ENCODE measurements at regions of chr1 and their contacts with region 1.

Region 1: DNA sequence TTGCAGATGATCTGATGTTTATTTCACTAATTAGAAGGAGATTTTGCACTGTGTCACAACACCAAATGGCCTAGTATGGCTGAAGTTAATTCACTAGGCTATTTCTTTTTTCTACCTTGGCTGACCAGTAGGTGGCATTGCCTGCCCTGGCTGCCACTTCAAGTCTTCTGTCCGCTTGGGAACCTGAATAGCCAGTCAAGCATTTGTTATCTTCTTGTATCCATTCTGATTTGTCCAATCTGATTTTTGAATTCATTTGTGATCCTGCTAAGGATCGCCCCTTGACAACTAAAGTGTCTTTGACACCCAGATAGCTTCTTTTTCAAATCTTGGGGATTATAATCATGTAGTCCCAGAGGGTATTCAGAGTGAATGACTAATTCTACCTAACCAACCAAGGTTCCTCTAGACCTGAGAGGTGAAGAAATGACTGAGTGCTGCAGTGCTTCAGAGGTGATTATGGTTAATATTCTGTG is 99.4 kb downstream of the GIPC2 start:
- DNase-seq: peak in 4 of 5 donors; percentile 29 to 36 (median 32)
- H3K4me3 ChIP-seq: no peak overlapping the region
- H3K4me3 Mint-ChIP-seq: peak overlapping the region in 1 of 8 donors; percentile 50
- H3K27ac ChIP-seq: no peak overlapping the region
- H3K27ac Mint-ChIP-seq: no peak overlapping the region
- H3K4me1 ChIP-seq: peaks cover 11% of the 10 kb centered on the region
- H3K4me1 Mint-ChIP-seq: peaks cover 8 to 35% (median 12%) of the 10 kb centered on the region in 4 donors
- H3K27me3 ChIP-seq: no peaks in the 10 kb centered on the region
- H3K27me3 Mint-ChIP-seq: peaks cover 9 to 13% of the 10 kb centered on the region in 2 donors

Region 2: DNA sequence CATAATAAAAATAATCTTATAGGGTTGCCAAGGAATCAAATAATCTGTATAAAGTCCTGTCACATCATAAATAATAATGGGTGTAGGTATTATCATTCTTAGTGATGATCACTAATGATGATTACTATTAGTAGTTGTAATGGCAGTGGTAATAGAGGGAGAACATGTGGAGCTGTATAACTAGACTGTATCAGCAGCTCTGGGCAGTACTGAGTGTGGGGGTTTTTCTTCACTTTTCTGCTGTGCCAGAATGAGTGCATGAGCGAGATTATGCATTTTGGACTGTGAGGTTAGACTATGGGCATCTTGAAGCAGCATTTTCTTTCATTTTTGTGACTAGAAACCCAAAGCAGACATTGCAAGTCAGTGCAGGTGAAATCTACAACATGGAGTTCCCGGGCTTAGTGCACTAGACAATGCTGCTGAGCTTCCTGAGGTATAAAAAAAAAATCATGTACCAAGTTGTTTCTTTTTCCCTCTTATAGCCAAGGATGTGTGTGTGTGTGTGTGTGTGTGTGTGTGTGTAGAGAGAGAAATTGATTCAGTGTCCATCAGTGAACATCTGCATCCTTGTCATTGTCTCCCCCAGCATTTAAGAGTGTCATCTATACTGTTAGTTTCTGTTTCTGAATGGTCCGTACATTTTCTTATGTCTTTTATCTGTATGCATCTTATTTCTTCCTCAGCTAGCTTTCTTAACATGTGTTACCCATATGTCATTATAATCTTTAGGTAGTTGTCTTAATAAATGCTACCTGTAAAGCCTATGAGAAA is 12.8 kb before region 1 on chr1:
- CTCF ChIA-PET with region 1: interaction called, 45 read pairs
- POLR2A ChIA-PET with region 1: interaction called, 3 read pairs
- intact Hi-C with region 1: no loop called
- DNase-seq: no peak
- H3K4me3 ChIP-seq: no peak overlapping the region
- H3K4me3 Mint-ChIP-seq: no peak overlapping the region
- H3K27ac ChIP-seq: no peak overlapping the region
- H3K27ac Mint-ChIP-seq: no peak overlapping the region
- H3K4me1 ChIP-seq: no peaks in the 10 kb centered on the region
- H3K4me1 Mint-ChIP-seq: no peaks in the 10 kb centered on the region
- H3K27me3 ChIP-seq: no peaks in the 10 kb centered on the region
- H3K27me3 Mint-ChIP-seq: no peaks in the 10 kb centered on the region

Region 3: GRCh38 chr1:78176448-78176847 is 31.3 kb after region 1 on chr1:
- CTCF ChIA-PET with region 1: no interaction called
- POLR2A ChIA-PET with region 1: no interaction called
- intact Hi-C with region 1: no loop called
- DNase-seq: no peak
- H3K4me3 ChIP-seq: no peak overlapping the region
- H3K4me3 Mint-ChIP-seq: no peak overlapping the region
- H3K27ac ChIP-seq: no peak overlapping the region
- H3K27ac Mint-ChIP-seq: no peak overlapping the region
- H3K4me1 ChIP-seq: no peaks in the 10 kb centered on the region
- H3K4me1 Mint-ChIP-seq: no peaks in the 10 kb centered on the region
- H3K27me3 ChIP-seq: no peaks in the 10 kb centered on the region
- H3K27me3 Mint-ChIP-seq: peaks cover 0 to 3% of the 10 kb centered on the region in 2 donors

Measured in CD4-positive, alpha-beta memory T cell (primary cell).